HCT116 (cell line): ENCODE measurements at regions of chr12 and their contacts with region 1.

Region 1: DNA sequence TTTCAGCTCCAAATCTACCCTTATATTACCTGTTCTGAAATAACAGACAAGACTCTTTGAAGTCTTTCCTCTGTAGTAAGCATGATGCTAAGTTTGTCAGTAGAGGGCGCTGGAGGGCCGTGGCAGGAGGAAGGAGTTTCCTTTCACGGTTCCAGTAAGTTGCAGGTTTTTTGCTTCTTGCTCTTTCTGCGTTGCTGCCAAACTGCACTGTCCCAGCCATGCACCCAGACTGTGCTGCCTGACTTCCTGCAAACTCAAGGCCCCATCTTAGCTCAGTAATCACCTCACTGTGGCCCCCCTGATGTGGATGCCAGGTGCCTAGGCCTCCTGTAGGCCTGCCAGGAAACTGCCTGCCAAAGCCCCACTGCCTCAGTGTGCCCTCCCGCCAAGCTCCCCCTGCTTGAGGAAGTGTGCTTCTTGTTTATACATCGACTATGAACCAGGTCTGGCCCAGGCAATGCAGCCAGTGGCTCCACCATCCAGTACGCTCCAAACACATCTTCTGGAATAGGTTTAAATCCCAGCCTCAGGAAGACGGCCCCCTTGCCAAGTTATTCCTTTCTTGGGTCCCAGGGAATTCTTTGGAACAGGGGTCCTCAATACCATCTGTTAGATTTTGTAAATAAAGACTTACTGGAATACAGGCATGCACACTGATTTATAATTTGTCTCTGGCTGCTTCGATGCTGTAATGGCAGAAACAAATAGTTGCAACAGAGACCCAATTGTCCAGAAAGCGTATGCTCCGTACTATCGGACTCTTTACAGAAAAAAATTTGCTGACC is 193.7 kb upstream of the LRIG3 start:
- DNase-seq: peak; percentile 72
- ATAC-seq: peak; percentile 95
- H3K4me3 ChIP-seq: no peak overlapping the region
- H3K27ac ChIP-seq: peak overlapping the region; percentile 28; the same call in 1 of the 2 replicates
- H3K4me1 ChIP-seq: peaks cover 0 to 3% of the 10 kb centered on the region in 2 experiments; a peak in 2 of 4 replicates
- H3K27me3 ChIP-seq: no peaks in the 10 kb centered on the region
- CTCF ChIP-seq: peak; percentile 87 to 99 (median 93)
- POLR2A ChIP-seq: no peak
- RAD21 ChIP-seq: peak; percentile 87

Region 2: GRCh38 chr12:58540480-58541299 is 573.3 kb before region 1 on chr12:
- CTCF ChIA-PET with region 1: interaction called, 3 read pairs
- POLR2A ChIA-PET with region 1: no interaction called
- RAD21 ChIA-PET with region 1: no interaction called
- intact Hi-C with region 1: loop called (anchors 1 kb)
- DNase-seq: peak; percentile 59
- ATAC-seq: peak; percentile 100
- H3K4me3 ChIP-seq: no peak overlapping the region
- H3K27ac ChIP-seq: no peak overlapping the region
- H3K4me1 ChIP-seq: no peaks in the 10 kb centered on the region
- H3K27me3 ChIP-seq: no peaks in the 10 kb centered on the region
- CTCF ChIP-seq: peak; percentile 70 to 83 (median 78); a peak in 5 of 6 replicates
- POLR2A ChIP-seq: no peak
- RAD21 ChIP-seq: peak; percentile 87

Region 3: DNA sequence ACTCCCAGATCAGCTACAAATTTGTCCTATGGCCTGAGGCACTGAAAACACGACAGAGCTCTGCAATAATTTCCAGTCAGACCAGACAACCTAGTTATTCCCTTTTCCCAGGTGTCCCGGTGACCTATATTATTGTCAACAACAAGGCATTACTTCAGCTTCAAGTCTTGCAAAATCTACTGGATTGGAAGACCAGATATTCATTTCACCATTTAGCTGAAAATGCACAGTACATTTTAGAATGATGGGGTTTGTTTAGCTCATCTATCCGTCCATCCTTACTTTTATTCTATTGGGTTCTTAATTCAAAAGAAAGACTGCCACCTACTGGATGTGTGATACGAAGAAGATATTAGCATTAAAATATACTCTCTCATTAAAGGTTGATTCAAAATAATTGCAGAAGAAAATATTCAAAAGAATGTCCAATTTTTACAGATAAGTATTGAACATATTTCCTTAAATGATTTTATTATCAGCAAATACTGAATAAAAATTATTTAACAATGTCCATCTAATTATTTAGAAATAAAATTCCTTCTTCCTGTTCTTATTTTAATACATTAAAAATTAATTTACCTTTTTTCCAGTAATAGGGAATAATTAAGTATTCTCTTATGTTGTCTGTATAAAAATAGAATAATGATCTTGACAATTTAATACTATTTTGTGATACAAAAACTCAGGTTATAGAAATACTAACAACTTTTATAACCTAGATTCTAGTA is 51.1 kb after region 1 on chr12:
- CTCF ChIA-PET with region 1: interaction called, 12 read pairs
- POLR2A ChIA-PET with region 1: no interaction called
- RAD21 ChIA-PET with region 1: interaction called in 1 of 2 experiments, 3 read pairs
- intact Hi-C with region 1: loop called (anchors 5 kb)
- DNase-seq: peak; percentile 16
- ATAC-seq: peak; percentile 61
- H3K4me3 ChIP-seq: no peak overlapping the region
- H3K27ac ChIP-seq: no peak overlapping the region
- H3K4me1 ChIP-seq: no peaks in the 10 kb centered on the region
- H3K27me3 ChIP-seq: no peaks in the 10 kb centered on the region
- CTCF ChIP-seq: peak; percentile 40 to 69 (median 46); a peak in 5 of 6 replicates
- POLR2A ChIP-seq: no peak
- RAD21 ChIP-seq: peak; percentile 49

Region 4: GRCh38 chr12:59403259-59403932 is 289.4 kb after region 1 on chr12:
- CTCF ChIA-PET with region 1: interaction called, 3 read pairs
- POLR2A ChIA-PET with region 1: no interaction called
- RAD21 ChIA-PET with region 1: no interaction called
- intact Hi-C with region 1: loop called (anchors 2 kb)
- DNase-seq: peak; percentile 55
- ATAC-seq: peak; percentile 90
- H3K4me3 ChIP-seq: peak overlapping the region; percentile 13 to 15; a peak in 3 of 4 replicates
- H3K27ac ChIP-seq: no peak overlapping the region
- H3K4me1 ChIP-seq: no peaks in the 10 kb centered on the region
- H3K27me3 ChIP-seq: no peaks in the 10 kb centered on the region
- CTCF ChIP-seq: peak; percentile 50 to 85 (median 82); a peak in 5 of 6 replicates
- POLR2A ChIP-seq: no peak
- RAD21 ChIP-seq: peak; percentile 67

Region 5: GRCh38 chr12:59834659-59835474 is 720.8 kb after region 1 on chr12:
- CTCF ChIA-PET with region 1: no interaction called
- POLR2A ChIA-PET with region 1: no interaction called
- RAD21 ChIA-PET with region 1: no interaction called
- intact Hi-C with region 1: loop called (anchors 10 kb)
- DNase-seq: peak; percentile 13
- ATAC-seq: peak; percentile 72; the same call in 1 of the 2 replicates
- H3K4me3 ChIP-seq: no peak overlapping the region
- H3K27ac ChIP-seq: no peak overlapping the region
- H3K4me1 ChIP-seq: no peaks in the 10 kb centered on the region
- H3K27me3 ChIP-seq: no peaks in the 10 kb centered on the region
- CTCF ChIP-seq: peak; percentile 52 to 77 (median 62); a peak in 5 of 6 replicates
- POLR2A ChIP-seq: no peak
- RAD21 ChIP-seq: peak; percentile 42; the same call in 1 of the 2 replicates